ENCODE measurements at regions of chr17 and their contacts with region 1.

Region 1: GRCh38 chr17:27533856-27534815 is 77.9 kb downstream of the KSR1 start:
- DNase-seq: peak; percentile 52
- H3K4me3 ChIP-seq: no peak overlapping the region
- H3K27ac ChIP-seq: peak overlapping the region; percentile 38
- H3K4me1 ChIP-seq: peaks cover 28% of the 10 kb centered on the region
- H3K27me3 ChIP-seq: no peaks in the 10 kb centered on the region
- CTCF ChIP-seq: no peak
- POLR2A ChIP-seq: no peak

Region 2: GRCh38 chr17:27473748-27474609 is 60.2 kb before region 1 on chr17:
- CTCF ChIA-PET with region 1: no interaction called
- POLR2A ChIA-PET with region 1: interaction called, 3 read pairs
- dilution Hi-C with region 1: no loop called
- intact Hi-C with region 1: loop called (anchors 5 kb)
- DNase-seq: peak; percentile 84
- H3K4me3 ChIP-seq: no peak overlapping the region
- H3K27ac ChIP-seq: peak overlapping the region; percentile 45
- H3K4me1 ChIP-seq: peaks cover 13% of the 10 kb centered on the region
- H3K27me3 ChIP-seq: no peaks in the 10 kb centered on the region
- CTCF ChIP-seq: no peak
- POLR2A ChIP-seq: peak; percentile 44

Region 3: DNA sequence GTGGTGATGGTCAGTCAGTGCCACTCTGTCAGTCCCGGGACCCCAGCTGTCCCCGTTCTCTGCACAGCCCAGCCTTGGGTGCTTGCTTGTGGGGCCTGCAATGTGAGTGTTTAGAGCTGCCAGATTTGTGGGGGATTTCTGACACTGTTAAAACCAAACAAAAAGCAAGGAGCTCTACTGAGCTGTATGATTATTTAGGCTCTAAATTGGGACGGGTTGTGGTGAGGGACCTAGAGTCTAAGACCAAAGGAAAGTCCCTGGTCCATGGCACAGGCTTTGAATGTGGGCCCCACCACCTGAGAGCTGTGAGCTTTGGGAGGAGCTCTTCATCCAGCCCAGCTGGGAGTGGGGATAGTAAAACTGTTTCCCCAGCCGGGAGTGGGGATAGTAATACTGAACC is 14.6 kb before region 1 on chr17:
- CTCF ChIA-PET with region 1: no interaction called
- POLR2A ChIA-PET with region 1: no interaction called
- dilution Hi-C with region 1: no loop called
- intact Hi-C with region 1: no loop called
- DNase-seq: no peak
- H3K4me3 ChIP-seq: no peak overlapping the region
- H3K27ac ChIP-seq: no peak overlapping the region
- H3K4me1 ChIP-seq: no peaks in the 10 kb centered on the region
- H3K27me3 ChIP-seq: no peaks in the 10 kb centered on the region
- CTCF ChIP-seq: no peak
- POLR2A ChIP-seq: no peak

Region 4: GRCh38 chr17:27586203-27586721 is 52.1 kb after region 1 on chr17:
- CTCF ChIA-PET with region 1: no interaction called
- POLR2A ChIA-PET with region 1: no interaction called
- dilution Hi-C with region 1: no loop called
- intact Hi-C with region 1: no loop called
- DNase-seq: no peak
- H3K4me3 ChIP-seq: no peak overlapping the region
- H3K27ac ChIP-seq: no peak overlapping the region
- H3K4me1 ChIP-seq: no peaks in the 10 kb centered on the region
- H3K27me3 ChIP-seq: no peaks in the 10 kb centered on the region
- CTCF ChIP-seq: no peak
- POLR2A ChIP-seq: no peak

Measured in endothelial cell of umbilical vein (primary cell).